ENCODE measurements at regions of chr6 and their contacts with region 1.

Region 1: DNA sequence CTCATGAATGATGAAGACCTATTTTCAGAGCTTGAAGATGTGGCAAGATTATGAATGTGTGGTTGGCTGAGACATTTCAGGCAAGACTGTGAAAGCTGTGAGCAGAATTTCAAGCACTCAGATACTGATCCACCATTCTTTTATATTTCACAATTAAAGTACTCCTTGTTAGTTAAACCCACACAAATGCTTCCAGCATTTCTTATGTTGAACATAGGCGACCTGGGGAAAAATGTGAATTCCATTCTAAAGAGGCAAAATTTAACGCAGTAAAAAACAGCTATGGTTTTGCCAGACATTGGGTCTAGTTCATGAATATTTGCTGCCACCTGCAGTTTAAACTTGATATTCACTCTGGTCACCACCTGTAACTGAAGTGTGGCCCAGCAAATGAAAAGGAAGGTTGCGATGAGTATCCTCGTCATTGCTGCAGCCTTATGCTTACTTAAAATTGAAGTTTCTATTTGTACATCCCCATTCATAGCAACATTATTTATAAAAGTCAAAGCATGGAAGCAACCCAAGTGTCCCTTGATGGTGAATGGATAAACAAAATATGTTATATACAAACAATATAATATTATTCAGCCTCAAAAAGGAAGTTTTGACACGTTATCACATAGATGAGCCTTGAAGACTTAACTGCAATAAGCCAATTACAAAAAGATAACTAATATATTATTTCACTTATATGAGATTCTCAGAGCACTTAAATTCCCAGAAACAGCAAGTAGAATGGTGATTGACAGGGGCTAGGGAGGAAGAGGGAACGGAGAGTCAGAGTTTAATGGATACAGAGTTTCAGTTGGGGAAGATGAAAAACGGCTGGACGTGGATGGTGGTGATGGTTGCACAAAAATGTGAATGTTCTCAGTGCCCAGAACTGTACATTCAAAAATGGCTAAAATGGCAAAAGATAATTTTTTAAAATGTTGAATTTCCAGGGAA is 32.4 kb upstream of the FAM184A start:
- DNase-seq: no peak
- H3K4me3 ChIP-seq: no peak overlapping the region
- H3K27me3 ChIP-seq: no peaks in the 10 kb centered on the region
- CTCF ChIP-seq: peak; percentile 53

Region 2: GRCh38 chr6:118963003-118963402 is 147.9 kb before region 1 on chr6:
- CTCF ChIA-PET with region 1: interaction called, 17 read pairs
- POLR2A ChIA-PET with region 1: no interaction called
- DNase-seq: no peak
- H3K4me3 ChIP-seq: no peak overlapping the region
- H3K27me3 ChIP-seq: no peaks in the 10 kb centered on the region
- CTCF ChIP-seq: peak; percentile 17; the same call in 1 of the 2 replicates

Region 3: DNA sequence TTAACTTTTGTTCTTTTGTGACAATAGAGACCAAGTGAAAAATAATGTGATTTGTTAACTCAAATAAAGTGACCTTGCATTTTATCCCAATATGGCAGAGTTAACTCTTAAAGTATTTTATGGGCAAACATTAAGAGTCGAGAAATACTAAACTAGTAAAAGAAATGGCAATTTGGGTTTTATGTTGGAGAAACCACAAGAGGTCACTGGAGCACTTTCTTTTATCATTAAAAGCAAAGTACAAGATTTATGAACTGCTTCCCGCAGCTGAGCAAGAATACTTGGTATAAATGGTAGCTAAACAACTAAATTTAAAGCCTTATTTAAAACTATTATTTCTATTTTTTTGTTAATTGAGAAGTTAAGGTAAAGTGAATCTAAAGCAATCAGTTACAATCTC is 142.5 kb before region 1 on chr6:
- CTCF ChIA-PET with region 1: interaction called, 17 read pairs
- POLR2A ChIA-PET with region 1: no interaction called
- DNase-seq: no peak
- H3K4me3 ChIP-seq: no peak overlapping the region
- H3K27me3 ChIP-seq: no peaks in the 10 kb centered on the region
- CTCF ChIP-seq: peak; percentile 13; the same call in 1 of the 2 replicates

Region 4: GRCh38 chr6:119099391-119099790 is 11.5 kb before region 1 on chr6:
- CTCF ChIA-PET with region 1: interaction called, 11 read pairs
- POLR2A ChIA-PET with region 1: no interaction called
- DNase-seq: no peak
- H3K4me3 ChIP-seq: no peak overlapping the region
- H3K27me3 ChIP-seq: no peaks in the 10 kb centered on the region
- CTCF ChIP-seq: no peak

Measured in BJ (cell line).